ENCODE measurements at regions of chr15 and their contacts with region 1.

Region 1: GRCh38 chr15:41774062-41774881 is at the start of gene MAPKBP1:
- DNase-seq: peak; percentile 99
- H3K4me3 Mint-ChIP-seq: peak within 1 kb of the TSS; percentile 90
- H3K27ac Mint-ChIP-seq: peak within 1 kb of the TSS; percentile 90
- H3K4me1 Mint-ChIP-seq: peaks cover 49% of the 10 kb centered on the region
- H3K27me3 Mint-ChIP-seq: no peaks in the 10 kb centered on the region
- total RNA-seq, gene MAPKBP1: 24.7 and 25.7 TPM in 2 replicates

Region 2: GRCh38 chr15:40782580-40783227 is 991.6 kb before region 1 on chr15:
- intact Hi-C with region 1: no loop called
- DNase-seq: peak; percentile 65
- H3K4me3 Mint-ChIP-seq: no peak overlapping the region
- H3K27ac Mint-ChIP-seq: no peak overlapping the region
- H3K4me1 Mint-ChIP-seq: peaks cover 16% of the 10 kb centered on the region
- H3K27me3 Mint-ChIP-seq: no peaks in the 10 kb centered on the region

Region 3: DNA sequence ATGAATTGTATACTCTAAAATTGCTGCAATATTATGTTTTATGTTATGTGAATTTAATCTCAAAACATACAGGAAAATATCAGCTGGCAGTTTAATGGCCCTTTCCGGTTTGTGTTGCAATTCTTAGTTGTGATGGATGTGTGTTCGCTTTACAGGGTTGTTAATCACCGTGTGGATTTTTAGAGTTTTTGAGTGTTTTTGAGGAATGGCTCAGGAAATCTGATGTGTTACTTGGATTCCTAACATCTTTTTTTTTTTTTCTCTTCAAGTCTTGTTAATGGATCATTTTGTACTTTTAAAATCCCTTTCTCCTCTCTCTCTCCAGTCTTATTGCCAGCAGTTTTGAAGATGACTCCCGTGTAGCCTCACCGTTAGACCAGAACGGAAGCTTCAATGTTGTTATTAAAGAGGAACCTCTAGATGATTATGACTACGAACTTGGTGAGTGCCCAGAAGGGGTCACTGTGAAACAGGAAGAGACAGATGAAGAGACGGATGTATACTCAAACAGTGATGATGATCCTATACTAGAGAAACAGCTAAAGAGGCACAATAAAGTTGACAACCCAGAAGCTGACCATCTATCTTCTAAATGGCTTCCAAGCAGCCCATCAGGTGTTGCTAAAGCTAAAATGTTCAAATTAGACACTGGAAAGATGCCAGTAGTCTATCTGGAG is 78.4 kb before region 1 on chr15:
- intact Hi-C with region 1: loop called (anchors 1 kb)
- DNase-seq: peak; percentile 33
- H3K4me3 Mint-ChIP-seq: peak overlapping the region; percentile 55
- H3K27ac Mint-ChIP-seq: peak overlapping the region; percentile 74
- H3K4me1 Mint-ChIP-seq: peaks cover 25% of the 10 kb centered on the region
- H3K27me3 Mint-ChIP-seq: no peaks in the 10 kb centered on the region

Region 4: GRCh38 chr15:41811432-41812195 is 37.3 kb after region 1 on chr15:
- intact Hi-C with region 1: loop called (anchors 1 kb)
- DNase-seq: peak; percentile 59
- H3K4me3 Mint-ChIP-seq: no peak overlapping the region
- H3K27ac Mint-ChIP-seq: peak overlapping the region; percentile 36
- H3K4me1 Mint-ChIP-seq: peaks cover 26% of the 10 kb centered on the region
- H3K27me3 Mint-ChIP-seq: no peaks in the 10 kb centered on the region

Region 5: GRCh38 chr15:41849861-41850260 is 75.6 kb after region 1 on chr15:
- intact Hi-C with region 1: no loop called
- DNase-seq: no peak
- H3K4me3 Mint-ChIP-seq: no peak overlapping the region
- H3K27ac Mint-ChIP-seq: no peak overlapping the region
- H3K4me1 Mint-ChIP-seq: peaks cover 6% of the 10 kb centered on the region
- H3K27me3 Mint-ChIP-seq: no peaks in the 10 kb centered on the region

Region 6: GRCh38 chr15:41904541-41905005 is 130.3 kb after region 1 on chr15:
- intact Hi-C with region 1: loop called (anchors 1 kb)
- DNase-seq: peak; percentile 56
- H3K4me3 Mint-ChIP-seq: no peak overlapping the region
- H3K27ac Mint-ChIP-seq: no peak overlapping the region
- H3K4me1 Mint-ChIP-seq: peaks cover 4% of the 10 kb centered on the region
- H3K27me3 Mint-ChIP-seq: no peaks in the 10 kb centered on the region

Region 7: GRCh38 chr15:42056934-42057779 is 282.9 kb after region 1 on chr15:
- intact Hi-C with region 1: loop called (anchors 2 kb)
- DNase-seq: peak; percentile 17
- H3K4me3 Mint-ChIP-seq: peak overlapping the region; percentile 53
- H3K27ac Mint-ChIP-seq: no peak overlapping the region
- H3K4me1 Mint-ChIP-seq: peaks cover 8% of the 10 kb centered on the region
- H3K27me3 Mint-ChIP-seq: peaks cover 42% of the 10 kb centered on the region

Measured in activated T-helper 2 cell treated with anti-CD3 and anti-CD28 coated beads, Interferon-gamma antibody, Interleukin-2, Interleukin-4, amounts not matched to agents 10 μg/mL and 5 μg/mL and 100 μg/mL, durations not matched to agents 14 hours and 24 hours and 36 hours (primary cell).